CD4-positive, alpha-beta T cell (primary cell): ENCODE measurements at regions of chr6 and their contacts with region 1.

Region 1: DNA sequence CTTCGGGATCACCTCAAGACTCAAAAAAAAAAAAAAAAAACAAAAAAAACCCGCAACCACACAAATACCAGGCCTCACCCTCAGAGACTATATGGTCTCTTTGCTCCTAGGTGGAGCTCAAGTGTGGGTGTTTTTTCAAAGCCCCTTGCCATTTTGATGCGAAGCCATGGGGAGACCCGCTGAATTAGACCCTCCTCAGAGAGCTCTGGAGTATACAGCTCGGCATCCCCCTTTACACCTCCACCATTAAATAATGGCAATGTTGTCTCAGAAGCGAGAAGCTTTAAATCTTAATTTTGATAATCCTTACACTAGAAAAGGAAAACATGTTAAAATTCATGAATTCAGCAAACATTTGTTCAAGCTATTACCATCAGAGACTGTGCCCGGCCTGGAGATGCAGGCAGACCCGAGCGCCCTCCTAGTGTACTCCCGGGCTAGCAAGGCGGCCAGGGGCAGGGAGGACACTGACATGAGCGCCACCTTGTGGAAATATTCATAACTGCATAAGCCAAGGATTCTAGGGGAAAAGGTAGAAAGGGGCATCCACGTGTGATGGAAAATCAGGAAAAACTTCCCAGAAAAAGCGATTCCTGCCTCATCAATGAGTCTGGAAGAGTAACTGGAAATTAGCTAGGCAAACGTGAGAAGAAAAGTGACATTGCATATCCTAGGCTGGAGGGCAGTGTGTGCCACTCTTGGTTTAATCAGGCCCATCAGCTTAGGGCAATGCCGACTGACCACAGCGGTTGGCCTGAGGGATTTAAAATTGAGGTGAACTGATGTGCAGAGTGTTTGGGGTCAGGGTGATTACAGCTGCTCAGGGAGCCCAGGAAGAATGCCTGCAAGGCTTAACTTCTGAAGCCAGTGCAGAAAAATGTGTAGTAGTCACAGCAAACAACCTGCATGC is 72.5 kb downstream of the B3GAT2 start:
- DNase-seq: peak; percentile 18 to 75 (median 37)
- ATAC-seq: peak; percentile 81
- H3K4me3 ChIP-seq: no peak overlapping the region
- H3K4me3 Mint-ChIP-seq: no peak overlapping the region
- H3K27ac ChIP-seq: no peak overlapping the region
- H3K27ac Mint-ChIP-seq: no peak overlapping the region
- H3K4me1 ChIP-seq: no peaks in the 10 kb centered on the region
- H3K4me1 Mint-ChIP-seq: no peaks in the 10 kb centered on the region
- H3K27me3 ChIP-seq: peaks cover 2 to 4% of the 10 kb centered on the region in 2 experiments
- H3K27me3 Mint-ChIP-seq: peaks cover 23% of the 10 kb centered on the region
- CTCF ChIP-seq: peak; percentile 91

Region 2: DNA sequence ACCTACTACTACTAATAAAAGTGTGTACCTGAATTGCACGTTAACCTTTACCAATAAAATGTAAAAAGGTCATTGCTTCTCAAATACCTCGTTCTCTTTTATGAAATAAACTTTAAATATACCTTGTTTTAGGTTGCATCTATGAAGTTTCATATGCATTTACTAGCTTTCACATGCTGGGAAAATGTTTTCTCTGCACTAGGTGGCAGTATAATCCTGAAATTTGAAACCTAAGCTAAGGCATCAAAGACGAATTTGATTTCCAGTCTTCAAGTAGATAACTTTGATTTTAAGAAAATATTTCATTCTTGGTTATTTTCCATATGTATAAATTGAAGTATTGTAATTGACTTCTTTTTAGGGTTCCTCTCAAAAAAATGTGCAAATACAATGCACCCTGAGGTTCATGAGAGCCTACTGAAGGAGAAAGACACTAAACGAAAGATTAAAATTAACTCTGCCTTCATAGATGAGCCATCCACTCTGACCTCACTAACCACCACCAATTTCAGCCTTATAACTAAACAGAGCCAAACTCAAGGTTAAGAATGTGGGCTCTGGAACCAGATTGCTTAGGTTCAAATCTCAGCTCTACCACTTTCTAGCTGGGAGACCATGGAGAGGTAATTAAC is 574.1 kb before region 1 on chr6:
- CTCF ChIA-PET with region 1: no interaction called
- POLR2A ChIA-PET with region 1: no interaction called
- intact Hi-C with region 1: loop called (anchors 2 to 5 kb)
- DNase-seq: peak in 3 of 14 experiments; percentile 39 to 44 (median 40)
- ATAC-seq: no peak
- H3K4me3 ChIP-seq: no peak overlapping the region
- H3K4me3 Mint-ChIP-seq: no peak overlapping the region
- H3K27ac ChIP-seq: no peak overlapping the region
- H3K27ac Mint-ChIP-seq: no peak overlapping the region
- H3K4me1 ChIP-seq: no peaks in the 10 kb centered on the region
- H3K4me1 Mint-ChIP-seq: no peaks in the 10 kb centered on the region
- H3K27me3 ChIP-seq: peaks cover 0 to 6% of the 10 kb centered on the region in 2 experiments
- H3K27me3 Mint-ChIP-seq: peaks cover 39% of the 10 kb centered on the region
- CTCF ChIP-seq: peak; percentile 60

Region 3: GRCh38 chr6:70375882-70376281 is 508.4 kb before region 1 on chr6:
- CTCF ChIA-PET with region 1: no interaction called
- POLR2A ChIA-PET with region 1: no interaction called
- intact Hi-C with region 1: loop called in 1 of 2 experiments (anchors 5 kb)
- DNase-seq: no peak
- ATAC-seq: no peak
- H3K4me3 ChIP-seq: no peak overlapping the region
- H3K4me3 Mint-ChIP-seq: no peak overlapping the region
- H3K27ac ChIP-seq: no peak overlapping the region
- H3K27ac Mint-ChIP-seq: no peak overlapping the region
- H3K4me1 ChIP-seq: no peaks in the 10 kb centered on the region
- H3K4me1 Mint-ChIP-seq: no peaks in the 10 kb centered on the region
- H3K27me3 ChIP-seq: no peaks in the 10 kb centered on the region
- H3K27me3 Mint-ChIP-seq: peaks cover 47% of the 10 kb centered on the region
- CTCF ChIP-seq: no peak

Region 4: GRCh38 chr6:70520575-70520974 is 363.8 kb before region 1 on chr6:
- CTCF ChIA-PET with region 1: no interaction called
- POLR2A ChIA-PET with region 1: no interaction called
- intact Hi-C with region 1: loop called in 1 of 2 experiments (anchors 2 kb)
- DNase-seq: peak in 4 of 14 experiments; percentile 14 to 51 (median 42)
- ATAC-seq: no peak
- H3K4me3 ChIP-seq: no peak overlapping the region
- H3K4me3 Mint-ChIP-seq: no peak overlapping the region
- H3K27ac ChIP-seq: no peak overlapping the region
- H3K27ac Mint-ChIP-seq: no peak overlapping the region
- H3K4me1 ChIP-seq: no peaks in the 10 kb centered on the region
- H3K4me1 Mint-ChIP-seq: peaks cover 7% of the 10 kb centered on the region
- H3K27me3 ChIP-seq: no peaks in the 10 kb centered on the region
- H3K27me3 Mint-ChIP-seq: no peaks in the 10 kb centered on the region
- CTCF ChIP-seq: peak; percentile 56

Region 5: DNA sequence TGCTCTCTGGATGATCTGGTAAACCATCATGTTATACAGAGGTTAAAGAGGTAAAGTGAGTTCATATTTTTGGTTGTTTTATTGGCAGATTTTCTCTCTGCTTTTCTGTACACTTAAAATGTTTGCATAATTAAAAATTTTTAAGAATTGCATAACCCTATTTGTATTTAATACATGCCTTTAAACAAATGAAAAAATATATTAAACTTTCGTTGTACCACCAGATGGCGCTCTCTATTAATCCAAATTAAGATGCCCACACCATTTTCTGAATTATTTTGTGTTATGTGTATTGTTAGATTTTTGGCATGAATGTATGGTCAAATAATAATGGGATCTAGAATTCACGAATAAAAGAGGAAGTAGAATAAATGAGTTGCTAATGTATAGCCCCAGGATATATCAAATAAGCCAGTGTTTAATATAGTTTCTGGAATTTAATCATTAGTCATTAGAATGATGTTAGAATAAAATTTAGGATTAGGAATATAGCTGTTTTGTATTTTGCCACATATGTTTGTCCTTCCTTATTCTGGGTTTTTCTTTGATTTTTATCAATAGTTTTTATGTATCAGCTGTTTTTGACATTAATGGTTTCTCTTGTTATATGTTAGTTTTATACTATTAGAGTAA is 177.7 kb before region 1 on chr6:
- CTCF ChIA-PET with region 1: interaction called, 18 read pairs
- POLR2A ChIA-PET with region 1: no interaction called
- intact Hi-C with region 1: loop called (anchors 1 kb)
- DNase-seq: peak in 4 of 14 experiments; percentile 30 to 74 (median 56)
- ATAC-seq: no peak
- H3K4me3 ChIP-seq: no peak overlapping the region
- H3K4me3 Mint-ChIP-seq: no peak overlapping the region
- H3K27ac ChIP-seq: no peak overlapping the region
- H3K27ac Mint-ChIP-seq: peak overlapping the region; percentile 8
- H3K4me1 ChIP-seq: no peaks in the 10 kb centered on the region
- H3K4me1 Mint-ChIP-seq: peaks cover 66% of the 10 kb centered on the region
- H3K27me3 ChIP-seq: no peaks in the 10 kb centered on the region
- H3K27me3 Mint-ChIP-seq: no peaks in the 10 kb centered on the region
- CTCF ChIP-seq: peak; percentile 82

Region 6: GRCh38 chr6:72832271-72832670 is 1947.9 kb after region 1 on chr6:
- CTCF ChIA-PET with region 1: no interaction called
- POLR2A ChIA-PET with region 1: no interaction called
- intact Hi-C with region 1: no loop called
- DNase-seq: no peak
- ATAC-seq: no peak
- H3K4me3 ChIP-seq: no peak overlapping the region
- H3K4me3 Mint-ChIP-seq: no peak overlapping the region
- H3K27ac ChIP-seq: no peak overlapping the region
- H3K27ac Mint-ChIP-seq: no peak overlapping the region
- H3K4me1 ChIP-seq: no peaks in the 10 kb centered on the region
- H3K4me1 Mint-ChIP-seq: no peaks in the 10 kb centered on the region
- H3K27me3 ChIP-seq: no peaks in the 10 kb centered on the region
- H3K27me3 Mint-ChIP-seq: no peaks in the 10 kb centered on the region
- CTCF ChIP-seq: no peak